ENCODE measurements at regions of chrX and their contacts with region 1.

Region 1: GRCh38 chrX:83008415-83008814 is 499.7 kb upstream of the POU3F4 start:
- DNase-seq: no peak
- ATAC-seq: peak; percentile 41; the same call in 1 of the 3 replicates
- H3K4me3 ChIP-seq: no peak overlapping the region
- H3K27ac ChIP-seq: no peak overlapping the region
- H3K4me1 ChIP-seq: no peaks in the 10 kb centered on the region
- H3K27me3 ChIP-seq: no peaks in the 10 kb centered on the region
- CTCF ChIP-seq: peak; percentile 38 to 46 (median 39); a peak in 4 of 6 replicates
- EP300 ChIP-seq: no peak
- POLR2A ChIP-seq: no peak
- RAD21 ChIP-seq: 0 out of 2 replicates have a peak, but pooled peaks have one; percentile 4

Region 2: GRCh38 chrX:82196866-82197265 is 811.5 kb before region 1 on chrX:
- CTCF ChIA-PET with region 1: no interaction called
- POLR2A ChIA-PET with region 1: no interaction called
- RAD21 ChIA-PET with region 1: no interaction called
- SMC1A ChIA-PET with region 1: no interaction called
- in situ Hi-C with region 1: no loop called
- intact Hi-C with region 1: no loop called
- DNase-seq: no peak
- ATAC-seq: no peak
- H3K4me3 ChIP-seq: no peak overlapping the region
- H3K27ac ChIP-seq: no peak overlapping the region
- H3K4me1 ChIP-seq: no peaks in the 10 kb centered on the region
- H3K27me3 ChIP-seq: no peaks in the 10 kb centered on the region
- CTCF ChIP-seq: no peak
- EP300 ChIP-seq: no peak
- POLR2A ChIP-seq: no peak
- RAD21 ChIP-seq: no peak

Region 3: GRCh38 chrX:83529950-83530349 is 521.5 kb after region 1 on chrX:
- CTCF ChIA-PET with region 1: no interaction called
- POLR2A ChIA-PET with region 1: no interaction called
- RAD21 ChIA-PET with region 1: no interaction called
- SMC1A ChIA-PET with region 1: no interaction called
- in situ Hi-C with region 1: no loop called
- intact Hi-C with region 1: no loop called
- DNase-seq: no peak
- ATAC-seq: no peak
- H3K4me3 ChIP-seq: no peak overlapping the region
- H3K27ac ChIP-seq: no peak overlapping the region
- H3K4me1 ChIP-seq: no peaks in the 10 kb centered on the region
- H3K27me3 ChIP-seq: no peaks in the 10 kb centered on the region
- CTCF ChIP-seq: no peak
- EP300 ChIP-seq: no peak
- POLR2A ChIP-seq: no peak
- RAD21 ChIP-seq: no peak

Region 4: DNA sequence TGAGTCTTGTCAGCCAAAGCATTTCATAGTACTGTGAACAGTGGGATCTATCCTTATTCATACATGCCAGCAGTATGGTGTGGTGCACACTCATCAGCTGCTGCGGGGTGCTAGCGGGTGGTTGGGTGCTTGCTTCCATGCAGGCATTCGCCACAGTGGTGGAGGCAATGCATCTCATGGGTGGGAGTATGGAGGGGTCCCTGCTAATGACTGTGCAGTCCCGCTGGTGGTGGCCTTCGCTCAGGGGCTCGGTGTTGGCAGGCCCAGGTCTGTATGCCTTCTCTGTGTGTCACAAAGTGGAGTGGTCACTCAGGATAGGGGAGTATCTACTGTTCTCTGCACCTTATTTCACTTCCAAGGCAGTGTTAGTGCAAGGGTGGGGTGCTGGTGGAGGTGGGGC is 622.2 kb after region 1 on chrX:
- CTCF ChIA-PET with region 1: interaction called, 3 read pairs
- POLR2A ChIA-PET with region 1: no interaction called
- RAD21 ChIA-PET with region 1: interaction called, 3 read pairs
- SMC1A ChIA-PET with region 1: interaction called, 6 read pairs
- in situ Hi-C with region 1: loop called (anchors 25 kb)
- intact Hi-C with region 1: loop called (anchors 2 kb)
- DNase-seq: no peak
- ATAC-seq: no peak
- H3K4me3 ChIP-seq: no peak overlapping the region
- H3K27ac ChIP-seq: no peak overlapping the region
- H3K4me1 ChIP-seq: no peaks in the 10 kb centered on the region
- H3K27me3 ChIP-seq: no peaks in the 10 kb centered on the region
- CTCF ChIP-seq: no peak
- EP300 ChIP-seq: no peak
- POLR2A ChIP-seq: no peak
- RAD21 ChIP-seq: no peak

Region 5: DNA sequence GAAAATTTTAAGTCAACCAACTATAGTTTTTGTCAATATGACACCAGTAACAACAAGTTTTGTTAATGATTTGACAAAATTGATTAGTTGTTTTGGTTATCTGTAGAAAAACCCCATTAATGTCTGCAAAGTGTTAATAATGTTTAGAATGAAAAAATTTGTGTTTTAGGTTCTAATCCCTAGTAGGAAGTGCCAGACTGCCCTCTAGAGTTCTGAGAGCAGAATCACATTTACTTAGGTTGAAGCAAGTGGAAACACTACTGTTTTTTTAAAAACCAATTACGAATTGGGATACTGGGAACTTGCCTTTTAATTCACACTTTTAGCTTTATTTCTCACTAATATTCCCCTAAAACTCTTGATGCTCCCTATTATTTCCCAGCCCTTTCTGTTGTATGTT is 751.5 kb after region 1 on chrX:
- CTCF ChIA-PET with region 1: no interaction called
- POLR2A ChIA-PET with region 1: no interaction called
- RAD21 ChIA-PET with region 1: interaction called, 3 read pairs
- SMC1A ChIA-PET with region 1: no interaction called
- in situ Hi-C with region 1: loop called (anchors 25 kb)
- intact Hi-C with region 1: loop called (anchors 1 kb)
- DNase-seq: no peak
- ATAC-seq: no peak
- H3K4me3 ChIP-seq: no peak overlapping the region
- H3K27ac ChIP-seq: no peak overlapping the region
- H3K4me1 ChIP-seq: no peaks in the 10 kb centered on the region
- H3K27me3 ChIP-seq: no peaks in the 10 kb centered on the region
- CTCF ChIP-seq: peak; percentile 43 to 54 (median 47); a peak in 5 of 6 replicates
- EP300 ChIP-seq: no peak
- POLR2A ChIP-seq: no peak
- RAD21 ChIP-seq: peak; percentile 62